Transverse colon (tissue), 4 donors: ENCODE measurements at regions of chr21 and their contacts with region 1.

Region 1: GRCh38 chr21:16342932-16343331 is 613.1 kb downstream of the USP25 start:
- DNase-seq: no peak
- H3K4me3 ChIP-seq: no peak overlapping the region
- H3K27ac ChIP-seq: no peak overlapping the region
- H3K4me1 ChIP-seq: no peaks in the 10 kb centered on the region
- H3K27me3 ChIP-seq: no peaks in the 10 kb centered on the region
- CTCF ChIP-seq: no peak
- EP300 ChIP-seq: no peak
- POLR2A ChIP-seq: no peak

Region 2: DNA sequence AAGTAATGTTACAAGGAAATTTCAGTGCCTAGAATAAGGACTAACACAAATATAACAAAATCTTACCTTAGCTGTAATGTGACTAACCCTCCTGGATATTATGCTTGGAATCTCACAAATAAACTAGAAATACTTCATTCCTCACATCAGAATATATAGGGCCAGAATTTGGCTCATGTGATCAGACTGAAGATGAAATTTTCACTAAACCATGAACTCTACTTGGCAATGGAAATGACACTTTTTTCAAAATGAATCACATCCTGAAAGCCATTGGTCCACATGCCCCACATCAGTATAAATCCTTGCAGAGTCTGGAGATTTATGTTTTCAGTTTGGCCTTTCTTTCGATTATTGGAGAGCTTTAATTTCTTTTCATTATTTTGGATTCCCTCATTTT is 1506.0 kb before region 1 on chr21:
- in situ Hi-C with region 1: no loop called
- intact Hi-C with region 1: loop called (anchors 10 kb)
- DNase-seq: no peak
- H3K4me3 ChIP-seq: no peak overlapping the region
- H3K27ac ChIP-seq: no peak overlapping the region
- H3K4me1 ChIP-seq: peaks cover 0 to 4% (median 0%) of the 10 kb centered on the region in 4 donors
- H3K27me3 ChIP-seq: no peaks in the 10 kb centered on the region
- CTCF ChIP-seq: no peak
- EP300 ChIP-seq: no peak
- POLR2A ChIP-seq: no peak

Region 3: DNA sequence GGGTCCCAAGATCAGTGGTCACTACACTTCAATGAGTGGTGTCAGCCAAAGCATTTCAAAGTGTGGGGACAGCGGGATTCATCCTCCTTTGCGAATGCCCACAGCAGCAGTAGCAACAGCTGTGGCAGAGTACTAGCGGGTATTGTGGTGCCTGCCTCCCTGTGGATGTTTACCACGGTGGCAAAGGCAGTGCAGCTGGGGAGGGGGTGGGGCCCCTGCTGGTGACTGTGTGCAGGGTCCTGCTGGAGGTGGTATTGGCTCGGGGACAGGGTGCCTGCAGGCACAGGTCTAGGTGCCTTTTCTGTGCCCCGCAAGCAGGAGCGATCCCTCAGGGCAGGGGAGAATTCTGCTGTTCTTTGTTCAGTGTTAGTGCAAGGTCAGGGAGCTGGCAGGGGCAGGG is 197.5 kb before region 1 on chr21:
- in situ Hi-C with region 1: no loop called
- intact Hi-C with region 1: no loop called
- DNase-seq: no peak
- H3K4me3 ChIP-seq: no peak overlapping the region
- H3K27ac ChIP-seq: no peak overlapping the region
- H3K4me1 ChIP-seq: no peaks in the 10 kb centered on the region
- H3K27me3 ChIP-seq: no peaks in the 10 kb centered on the region
- CTCF ChIP-seq: no peak
- EP300 ChIP-seq: no peak
- POLR2A ChIP-seq: no peak